ENCODE measurements at regions of chr15 and their contacts with region 1.

Region 1: GRCh38 chr15:63920504-63921175 is 86.9 kb upstream of the HERC1 start:
- DNase-seq: no peak
- CTCF ChIP-seq: no peak

Region 2: GRCh38 chr15:63884953-63885352 is 35.7 kb before region 1 on chr15:
- CTCF ChIA-PET with region 1: no interaction called
- POLR2A ChIA-PET with region 1: no interaction called
- DNase-seq: no peak
- CTCF ChIP-seq: no peak

Region 3: DNA sequence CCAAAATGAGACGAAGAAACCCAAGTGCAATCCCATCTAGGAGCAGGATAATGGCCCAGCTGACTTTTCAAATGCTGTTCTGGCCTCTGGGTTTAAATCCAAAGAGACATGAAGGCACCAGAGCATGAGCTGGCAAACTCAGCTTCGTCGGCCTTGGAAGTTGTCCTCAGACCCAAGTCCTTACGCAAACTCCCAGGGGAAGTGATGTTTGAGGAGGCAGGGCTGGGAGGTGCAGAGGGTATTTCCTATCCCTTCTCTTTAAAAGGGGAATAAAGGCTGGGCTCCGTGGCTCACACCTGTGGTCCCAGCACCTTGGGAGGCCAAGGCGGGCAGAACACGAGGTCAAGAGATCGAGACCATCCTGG is 18.0 kb before region 1 on chr15:
- CTCF ChIA-PET with region 1: interaction called, 10 read pairs
- POLR2A ChIA-PET with region 1: no interaction called
- DNase-seq: no peak
- CTCF ChIP-seq: no peak

Region 4: DNA sequence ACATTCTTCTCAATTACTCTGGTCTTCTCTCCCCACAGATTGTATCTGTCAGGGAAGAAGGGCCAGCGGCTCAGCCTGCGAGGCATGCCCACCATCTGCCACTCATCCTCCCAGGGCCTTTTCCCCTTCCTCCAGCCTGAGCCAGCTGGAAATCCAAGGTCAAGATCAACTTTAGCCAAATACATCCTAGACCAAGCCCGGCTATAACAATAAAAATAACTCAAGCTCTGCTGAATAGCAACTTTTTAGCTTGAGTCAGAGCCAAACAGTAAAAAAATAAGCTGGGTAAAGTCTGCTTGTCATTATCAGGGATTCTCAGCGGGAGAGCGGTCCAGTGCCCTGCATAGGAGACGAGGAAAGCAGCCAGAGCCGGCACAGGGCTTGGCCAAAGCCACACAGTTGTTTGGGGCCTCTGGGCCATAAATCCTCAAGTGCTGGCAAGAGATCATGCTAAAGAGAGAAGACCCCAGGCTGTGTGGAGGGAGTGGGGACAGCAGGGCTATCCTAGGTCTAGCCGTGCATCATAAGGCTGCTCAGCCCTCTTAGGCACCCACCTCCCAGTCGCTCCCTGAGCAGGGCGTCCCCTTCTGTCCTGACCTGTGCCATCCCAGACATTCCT is 10.7 kb before region 1 on chr15:
- CTCF ChIA-PET with region 1: interaction called, 10 read pairs
- POLR2A ChIA-PET with region 1: no interaction called
- DNase-seq: no peak
- CTCF ChIP-seq: no peak

Measured in GM10248 (cell line).